Activated T-helper 1 cell treated with anti-CD3 and anti-CD28 coated beads, Interleukin-12 subunit alpha, Interleukin-12 subunit beta, Interleukin-2, Interleukin-4 antibody, amounts not matched to agents 30 ng/mL and 10 ng/mL and 1 ng/mL, durations not matched to agents 14 hours and 24 hours and 36 hours (primary cell): ENCODE measurements at regions of chr1 and their contacts with region 1.

Region 1: GRCh38 chr1:7770997-7771822 is at the start of gene VAMP3:
- DNase-seq: peak; percentile 78
- H3K4me3 Mint-ChIP-seq: peak within 1 kb of the TSS; percentile 90
- H3K27ac Mint-ChIP-seq: peak within 1 kb of the TSS; percentile 82
- H3K4me1 Mint-ChIP-seq: peaks cover 43% of the 10 kb centered on the region
- H3K27me3 Mint-ChIP-seq: peaks cover 24% of the 10 kb centered on the region
- total RNA-seq, gene VAMP3: 25.1 and 26.8 TPM in 2 replicates

Region 2: GRCh38 chr1:6795661-6796060 is 975.5 kb before region 1 on chr1:
- intact Hi-C with region 1: no loop called
- DNase-seq: no peak
- H3K4me3 Mint-ChIP-seq: no peak overlapping the region
- H3K27ac Mint-ChIP-seq: no peak overlapping the region
- H3K4me1 Mint-ChIP-seq: peaks cover 6% of the 10 kb centered on the region
- H3K27me3 Mint-ChIP-seq: no peaks in the 10 kb centered on the region

Region 3: DNA sequence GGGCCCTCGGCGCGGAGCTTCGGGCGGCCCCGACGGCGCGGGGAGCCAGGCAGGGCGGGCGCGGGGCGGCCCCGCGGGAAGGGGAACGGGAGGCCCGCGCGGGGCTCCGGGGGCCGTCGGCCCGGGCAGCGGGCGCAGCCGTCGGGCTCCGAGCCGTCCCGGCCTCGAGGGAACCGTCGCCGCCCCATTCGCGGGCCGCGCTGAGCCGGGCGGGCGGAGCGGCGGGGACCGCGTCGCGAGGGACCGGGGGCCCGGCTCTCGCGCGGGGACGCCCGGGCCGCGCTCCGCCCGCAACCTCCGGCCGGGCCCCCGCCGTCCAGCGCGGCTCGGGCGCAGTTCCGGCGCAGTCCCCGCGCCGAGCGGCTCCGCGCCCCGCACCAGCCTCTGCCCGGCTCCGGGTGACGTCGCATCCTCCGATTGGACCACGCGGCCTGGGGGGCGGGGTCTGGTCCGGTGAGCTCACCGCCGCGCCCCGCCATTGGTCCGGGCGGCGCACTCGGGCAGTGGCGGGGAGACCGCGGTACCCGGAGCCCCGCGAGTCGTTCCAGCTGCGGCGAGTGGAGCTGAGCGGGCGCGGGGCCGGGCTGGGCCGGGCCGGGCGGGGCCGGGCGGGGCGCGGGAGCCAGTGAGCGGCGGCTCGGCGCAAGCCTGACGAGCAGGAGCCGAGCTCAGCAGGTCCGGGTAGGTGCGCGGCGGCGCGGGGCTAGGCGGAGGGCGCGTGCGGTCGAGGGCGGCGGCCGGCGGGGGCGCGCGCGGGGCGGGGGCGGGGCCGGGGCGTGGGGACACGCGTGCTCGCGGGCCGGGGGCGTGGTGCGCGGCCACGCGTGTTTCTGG is 66.8 kb before region 1 on chr1:
- intact Hi-C with region 1: loop called (anchors 5 kb)
- DNase-seq: peak; percentile 91
- H3K4me3 Mint-ChIP-seq: no peak overlapping the region
- H3K27ac Mint-ChIP-seq: no peak overlapping the region
- H3K4me1 Mint-ChIP-seq: no peaks in the 10 kb centered on the region
- H3K27me3 Mint-ChIP-seq: peaks cover 65% of the 10 kb centered on the region

Region 4: GRCh38 chr1:7783826-7784491 is 12.7 kb after region 1 on chr1 and contains the start of gene PER3:
- intact Hi-C with region 1: loop called (anchors 1 kb)
- DNase-seq: peak; percentile 87
- H3K4me3 Mint-ChIP-seq: peak within 1 kb of the TSS; percentile 74
- H3K27ac Mint-ChIP-seq: no peak within 1 kb of the TSS
- H3K4me1 Mint-ChIP-seq: peaks cover 21% of the 10 kb centered on the region
- H3K27me3 Mint-ChIP-seq: peaks cover 7% of the 10 kb centered on the region
- total RNA-seq, gene PER3: 4.0 and 4.4 TPM in 2 replicates